Sciatic nerve (tissue), 2 donors: ENCODE measurements at regions of chr14 and their contacts with region 1.

Region 1: GRCh38 chr14:103104654-103105452 is 10.3 kb downstream of the EXOC3L4 start:
- DNase-seq: peak; percentile 86
- ATAC-seq: peak; percentile 82

Region 2: DNA sequence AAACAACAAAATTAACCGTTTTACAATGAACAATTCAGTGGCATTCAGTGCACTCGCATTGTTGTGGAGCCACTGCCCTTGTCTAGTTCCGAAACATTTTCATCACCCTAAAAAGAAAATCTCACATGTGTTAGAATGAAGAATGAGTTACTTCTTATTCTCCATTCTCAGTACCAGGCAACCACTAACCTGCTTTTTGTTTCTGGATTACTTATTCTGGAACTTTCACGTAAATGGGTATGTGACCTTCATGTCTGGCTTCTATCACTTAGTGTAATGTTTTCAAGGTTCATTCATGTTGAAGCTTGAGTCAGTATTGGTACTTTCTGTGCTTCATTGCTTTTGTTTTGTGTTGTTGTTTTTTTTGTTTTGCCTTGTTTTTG is 496.8 kb before region 1 on chr14:
- intact Hi-C with region 1: no loop called
- DNase-seq: no peak
- ATAC-seq: no peak

Region 3: GRCh38 chr14:103185051-103185992 is 80.5 kb after region 1 on chr14:
- intact Hi-C with region 1: loop called (anchors 10 kb)
- DNase-seq: no peak
- ATAC-seq: no peak

Region 4: GRCh38 chr14:103232298-103232808 is 127.5 kb after region 1 on chr14:
- intact Hi-C with region 1: no loop called
- DNase-seq: no peak
- ATAC-seq: no peak

Region 5: GRCh38 chr14:103292426-103293374 is 187.8 kb after region 1 on chr14:
- intact Hi-C with region 1: loop called (anchors 2 kb)
- DNase-seq: peak; percentile 90
- ATAC-seq: peak; percentile 95

Region 6: GRCh38 chr14:104246401-104247335 is 1141.8 kb after region 1 on chr14:
- intact Hi-C with region 1: loop called (anchors 5 kb)
- DNase-seq: peak; percentile 41
- ATAC-seq: no peak

Region 7: GRCh38 chr14:104350463-104351185 is 1245.8 kb after region 1 on chr14:
- intact Hi-C with region 1: no loop called
- DNase-seq: peak; percentile 64
- ATAC-seq: peak; percentile 87